GM10248 (cell line): ENCODE measurements at regions of chr3 and their contacts with region 1.

Region 1: DNA sequence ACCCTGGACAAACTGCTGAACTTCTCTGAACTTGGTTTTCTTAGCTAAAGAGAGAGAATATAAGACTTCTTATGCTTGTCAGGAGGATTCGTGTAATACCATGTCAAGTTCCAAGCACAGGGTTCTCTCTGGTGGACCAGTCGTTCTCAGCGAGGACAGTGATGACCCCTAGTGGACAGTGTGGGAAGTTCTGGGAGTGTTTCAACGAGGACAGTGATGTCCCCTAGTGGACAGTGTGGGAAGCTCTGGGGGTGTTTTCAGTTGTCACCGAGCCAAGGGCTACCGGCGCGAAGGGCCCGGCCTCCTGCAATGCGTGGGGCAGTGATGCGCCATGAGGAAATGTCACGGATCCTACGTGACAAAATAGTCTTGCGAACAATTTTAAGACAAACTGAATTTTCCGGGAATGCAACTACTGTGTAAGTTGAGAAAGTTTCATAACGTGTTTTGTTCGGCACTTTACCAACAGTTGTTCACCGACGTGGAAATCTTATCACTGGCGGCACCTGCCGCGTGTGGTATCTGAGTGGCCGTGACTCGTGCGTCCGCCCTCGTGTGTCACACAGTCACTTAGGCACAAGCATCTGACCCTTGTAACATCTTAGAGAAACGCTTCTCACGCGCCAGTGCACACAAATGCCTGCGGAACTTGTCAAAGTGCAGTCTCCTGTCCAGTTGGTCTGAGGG is 39.3 kb upstream of the MUC4 start:
- DNase-seq: peak; percentile 92
- CTCF ChIP-seq: peak; percentile 99

Region 2: DNA sequence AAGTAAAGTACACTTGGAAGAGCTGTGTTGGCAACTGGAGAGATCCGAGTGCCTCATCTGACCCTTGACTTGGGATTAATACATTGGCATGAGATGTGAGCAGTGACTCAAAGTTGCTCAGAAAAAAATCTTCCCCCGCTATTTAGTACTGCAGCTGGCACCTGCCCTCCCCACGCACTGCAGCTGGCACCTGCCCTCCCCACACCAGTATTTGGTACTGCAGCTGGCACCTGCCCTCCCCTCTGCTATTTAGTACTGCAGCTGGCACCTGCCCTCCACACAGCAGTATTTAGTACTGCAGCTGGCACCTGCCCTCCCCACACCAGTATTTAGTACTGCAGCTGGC is 134.2 kb before region 1 on chr3:
- CTCF ChIA-PET with region 1: interaction called, 10 read pairs
- POLR2A ChIA-PET with region 1: no interaction called
- DNase-seq: no peak
- CTCF ChIP-seq: no peak

Region 3: DNA sequence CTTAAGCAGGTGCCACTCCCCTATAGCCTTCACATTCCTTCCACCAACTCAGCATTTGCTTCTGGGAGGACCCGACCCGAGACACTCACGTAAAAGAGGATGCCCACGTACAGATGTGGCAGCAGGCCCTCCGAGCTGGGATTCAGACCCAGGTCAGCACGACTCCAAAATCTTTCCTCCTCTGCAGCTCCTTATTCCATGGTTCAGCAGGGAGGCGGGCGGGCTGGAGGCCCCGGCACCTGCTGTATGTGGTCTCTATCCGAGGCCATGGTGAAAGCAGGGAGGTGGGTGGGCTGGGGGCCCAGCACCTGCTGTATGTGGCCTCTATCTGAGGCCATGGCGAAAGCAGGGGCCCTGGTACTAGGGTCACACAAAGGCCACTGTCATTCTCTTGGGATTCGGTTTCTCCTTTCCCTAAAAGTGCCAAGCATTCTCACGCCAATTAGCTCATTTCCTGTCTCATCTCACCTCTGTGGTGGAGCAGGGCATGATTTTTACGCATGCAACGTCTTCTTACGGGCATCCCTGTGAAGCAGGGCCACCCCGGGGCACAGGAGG is 33.3 kb before region 1 on chr3:
- CTCF ChIA-PET with region 1: interaction called, 13 read pairs
- POLR2A ChIA-PET with region 1: no interaction called
- DNase-seq: no peak
- CTCF ChIP-seq: no peak

Region 4: GRCh38 chr3:195863121-195864006 is 12.4 kb after region 1 on chr3:
- CTCF ChIA-PET with region 1: interaction called, 45 read pairs
- POLR2A ChIA-PET with region 1: no interaction called
- DNase-seq: peak; percentile 84
- CTCF ChIP-seq: peak; percentile 94

Region 5: DNA sequence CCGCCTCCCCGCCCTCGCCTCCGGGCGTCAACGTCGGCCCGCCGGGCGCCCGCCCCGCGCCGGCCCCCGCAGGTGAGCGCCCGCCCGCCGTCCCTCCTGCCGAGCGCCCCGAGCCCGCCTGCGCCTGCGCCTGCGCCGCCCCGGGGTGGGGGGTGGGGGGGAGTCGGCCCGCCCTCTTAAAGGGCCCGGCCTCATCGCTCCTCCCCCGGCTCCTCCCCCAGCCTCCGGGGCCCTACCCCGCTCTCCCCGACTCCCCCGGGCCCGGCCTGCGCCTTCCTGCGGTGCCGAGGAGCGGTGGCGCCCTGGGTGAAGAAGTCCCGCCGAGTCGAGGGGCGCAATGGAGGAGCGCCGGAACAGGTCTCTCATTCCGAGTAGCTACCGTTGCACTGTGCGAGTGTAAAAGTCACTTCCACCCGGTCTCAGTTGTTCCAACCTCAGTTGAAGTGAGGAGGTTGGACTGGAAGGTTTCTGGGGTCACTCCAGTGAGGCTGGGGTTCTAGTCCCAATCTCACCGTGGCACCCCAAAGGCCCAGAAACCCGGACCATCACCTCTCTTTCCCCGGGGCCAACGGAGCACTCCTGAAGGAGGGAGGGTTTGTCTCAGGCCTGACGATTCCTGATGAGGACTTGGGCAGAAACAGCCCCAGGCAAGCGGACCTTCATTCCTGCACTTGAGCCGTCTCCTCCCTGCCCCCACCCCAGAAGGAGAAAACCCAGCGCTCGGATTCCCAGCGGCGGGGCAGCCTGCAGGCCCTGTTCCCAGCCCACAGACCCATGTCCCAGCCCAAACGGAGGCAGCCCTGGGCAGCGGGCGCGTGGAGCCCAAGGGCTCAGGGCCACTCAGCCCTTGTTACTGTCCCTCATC is 58.9 kb after region 1 on chr3:
- CTCF ChIA-PET with region 1: interaction called, 144 read pairs
- POLR2A ChIA-PET with region 1: no interaction called
- DNase-seq: peak; percentile 99
- CTCF ChIP-seq: no peak